B cell (primary cell): ENCODE measurements at regions of chr19 and their contacts with region 1.

Region 1: DNA sequence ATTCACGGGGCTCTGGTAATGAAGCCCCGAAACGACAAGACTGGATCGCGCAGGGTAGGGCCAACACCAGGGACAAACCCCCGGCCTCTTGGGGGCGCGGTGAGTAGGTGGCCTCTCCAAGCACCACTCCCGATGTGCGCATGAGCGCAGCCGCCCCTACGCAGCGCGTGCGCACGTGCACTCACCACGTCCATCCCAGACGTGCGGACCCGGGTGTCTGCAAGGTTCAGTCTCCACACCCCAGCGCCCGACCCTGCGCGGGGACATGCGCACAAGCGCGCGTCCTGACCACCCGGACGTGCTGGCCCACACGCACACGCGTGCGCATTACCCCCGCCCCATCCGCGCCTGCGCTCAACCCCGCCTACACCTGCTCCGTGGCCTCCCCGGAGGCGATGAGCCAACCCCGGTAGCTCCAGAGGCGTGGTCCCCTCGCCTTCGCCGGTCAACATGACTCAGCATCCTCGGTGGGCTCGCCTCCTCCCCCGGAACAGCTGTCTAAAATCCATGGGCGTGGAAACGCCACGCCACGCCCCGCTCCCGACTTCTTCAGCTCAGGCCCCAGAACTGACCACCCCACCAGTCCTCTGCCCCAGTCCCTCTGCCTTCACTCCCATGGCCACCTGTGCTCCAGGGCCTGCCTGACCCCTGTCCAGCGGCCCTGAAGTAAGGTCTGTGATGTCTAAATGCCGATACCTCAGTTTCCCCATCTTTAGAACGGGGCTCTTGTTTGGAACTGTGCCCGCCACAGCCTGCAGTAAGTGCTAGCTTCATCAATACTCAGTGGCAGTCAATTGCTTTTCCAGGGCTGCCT is 5.6 kb upstream of the GPI start:
- DNase-seq: peak; percentile 96
- ATAC-seq: peak; percentile 92
- H3K4me3 ChIP-seq: peak overlapping the region; percentile 54 to 67 (median 56)
- H3K4me3 Mint-ChIP-seq: peak overlapping the region; percentile 96
- H3K27ac ChIP-seq: peak overlapping the region; percentile 59 to 68
- H3K27ac Mint-ChIP-seq: peak overlapping the region; percentile 97
- H3K4me1 ChIP-seq: peaks cover 12 to 20% of the 10 kb centered on the region in 2 donors
- H3K4me1 Mint-ChIP-seq: peaks cover 26% of the 10 kb centered on the region
- H3K27me3 ChIP-seq: no peaks in the 10 kb centered on the region
- H3K27me3 Mint-ChIP-seq: no peaks in the 10 kb centered on the region
- CTCF ChIP-seq: peak; percentile 66

Region 2: GRCh38 chr19:34411216-34411615 is 51.9 kb after region 1 on chr19:
- CTCF ChIA-PET with region 1: no interaction called
- POLR2A ChIA-PET with region 1: no interaction called
- intact Hi-C with region 1: no loop called
- DNase-seq: no peak
- ATAC-seq: no peak
- H3K4me3 ChIP-seq: no peak overlapping the region
- H3K4me3 Mint-ChIP-seq: no peak overlapping the region
- H3K27ac ChIP-seq: no peak overlapping the region
- H3K27ac Mint-ChIP-seq: no peak overlapping the region
- H3K4me1 ChIP-seq: peaks cover 0 to 12% of the 10 kb centered on the region in 2 donors
- H3K4me1 Mint-ChIP-seq: peaks cover 14% of the 10 kb centered on the region
- H3K27me3 ChIP-seq: no peaks in the 10 kb centered on the region
- H3K27me3 Mint-ChIP-seq: no peaks in the 10 kb centered on the region
- CTCF ChIP-seq: no peak

Region 3: GRCh38 chr19:34428549-34429285 is 69.4 kb after region 1 on chr19:
- CTCF ChIA-PET with region 1: interaction called, 9 read pairs
- POLR2A ChIA-PET with region 1: no interaction called
- intact Hi-C with region 1: loop called (anchors 1 kb)
- DNase-seq: no peak
- ATAC-seq: peak; percentile 37
- H3K4me3 ChIP-seq: peak overlapping the region; percentile 70 to 93 (median 78)
- H3K4me3 Mint-ChIP-seq: peak overlapping the region; percentile 98
- H3K27ac ChIP-seq: peak overlapping the region; percentile 65 to 90
- H3K27ac Mint-ChIP-seq: peak overlapping the region; percentile 96
- H3K4me1 ChIP-seq: peaks cover 22 to 24% of the 10 kb centered on the region in 2 donors
- H3K4me1 Mint-ChIP-seq: peaks cover 37% of the 10 kb centered on the region
- H3K27me3 ChIP-seq: no peaks in the 10 kb centered on the region
- H3K27me3 Mint-ChIP-seq: no peaks in the 10 kb centered on the region
- CTCF ChIP-seq: no peak